CD4-positive, alpha-beta memory T cell (primary cell): ENCODE measurements at regions of chr2 and their contacts with region 1.

Region 1: GRCh38 chr2:61470965-61471904 is at the start of gene USP34:
- DNase-seq: peak; percentile 89 to 95 (median 92)
- H3K4me3 ChIP-seq: peak within 1 kb of the TSS; percentile 68 to 89
- H3K4me3 Mint-ChIP-seq: peak within 1 kb of the TSS; percentile 92 to 98 (median 95)
- H3K27ac ChIP-seq: peak within 1 kb of the TSS; percentile 98
- H3K27ac Mint-ChIP-seq: peak within 1 kb of the TSS; percentile 93 to 100 (median 99)
- H3K4me1 ChIP-seq: peaks cover 41% of the 10 kb centered on the region
- H3K4me1 Mint-ChIP-seq: peaks cover 12 to 46% (median 29%) of the 10 kb centered on the region in 4 donors
- H3K27me3 ChIP-seq: no peaks in the 10 kb centered on the region
- H3K27me3 Mint-ChIP-seq: no peaks in the 10 kb centered on the region
- total RNA-seq, gene USP34: 163 to 164 TPM

Region 2: GRCh38 chr2:60861736-60862135 is 609.5 kb before region 1 on chr2:
- CTCF ChIA-PET with region 1: no interaction called
- POLR2A ChIA-PET with region 1: no interaction called
- intact Hi-C with region 1: no loop called
- DNase-seq: no peak
- H3K4me3 ChIP-seq: no peak overlapping the region
- H3K4me3 Mint-ChIP-seq: no peak overlapping the region
- H3K27ac ChIP-seq: no peak overlapping the region
- H3K27ac Mint-ChIP-seq: no peak overlapping the region
- H3K4me1 ChIP-seq: no peaks in the 10 kb centered on the region
- H3K4me1 Mint-ChIP-seq: peaks cover 0 to 1% (median under 1%) of the 10 kb centered on the region in 4 donors
- H3K27me3 ChIP-seq: no peaks in the 10 kb centered on the region
- H3K27me3 Mint-ChIP-seq: peaks cover 6 to 13% of the 10 kb centered on the region in 2 donors

Region 3: GRCh38 chr2:61493523-61493942 is 22.3 kb after region 1 on chr2:
- CTCF ChIA-PET with region 1: no interaction called
- POLR2A ChIA-PET with region 1: interaction called, 4 read pairs
- intact Hi-C with region 1: loop called (anchors 2 kb)
- DNase-seq: peak in 4 of 5 donors; percentile 18 to 30 (median 22)
- H3K4me3 ChIP-seq: peak overlapping the region in 1 of 2 donors; percentile 5
- H3K4me3 Mint-ChIP-seq: peak overlapping the region in 7 of 8 donors; percentile 23 to 79 (median 57)
- H3K27ac ChIP-seq: peak overlapping the region; percentile 23
- H3K27ac Mint-ChIP-seq: peak overlapping the region; percentile 43 to 87 (median 70)
- H3K4me1 ChIP-seq: peaks cover 17% of the 10 kb centered on the region
- H3K4me1 Mint-ChIP-seq: peaks cover 11 to 29% (median 20%) of the 10 kb centered on the region in 4 donors
- H3K27me3 ChIP-seq: no peaks in the 10 kb centered on the region
- H3K27me3 Mint-ChIP-seq: no peaks in the 10 kb centered on the region

Region 4: GRCh38 chr2:61764035-61764800 is 293.0 kb after region 1 on chr2:
- CTCF ChIA-PET with region 1: no interaction called
- POLR2A ChIA-PET with region 1: interaction called, 3 read pairs
- intact Hi-C with region 1: loop called (anchors 1 kb)
- DNase-seq: peak; percentile 95 to 98 (median 96)
- H3K4me3 ChIP-seq: peak overlapping the region; percentile 78 to 83
- H3K4me3 Mint-ChIP-seq: peak overlapping the region; percentile 93 to 98 (median 96)
- H3K27ac ChIP-seq: peak overlapping the region; percentile 94
- H3K27ac Mint-ChIP-seq: peak overlapping the region; percentile 95 to 99 (median 99)
- H3K4me1 ChIP-seq: peaks cover 15% of the 10 kb centered on the region
- H3K4me1 Mint-ChIP-seq: peaks cover 8 to 22% (median 15%) of the 10 kb centered on the region in 4 donors
- H3K27me3 ChIP-seq: no peaks in the 10 kb centered on the region
- H3K27me3 Mint-ChIP-seq: peaks cover 0 to 2% of the 10 kb centered on the region in 2 donors